Activated B cell treated with CpG ODN at 0.5 μM for 24 hours (primary cell): ENCODE measurements at regions of chr2 and their contacts with region 1.

Region 1: DNA sequence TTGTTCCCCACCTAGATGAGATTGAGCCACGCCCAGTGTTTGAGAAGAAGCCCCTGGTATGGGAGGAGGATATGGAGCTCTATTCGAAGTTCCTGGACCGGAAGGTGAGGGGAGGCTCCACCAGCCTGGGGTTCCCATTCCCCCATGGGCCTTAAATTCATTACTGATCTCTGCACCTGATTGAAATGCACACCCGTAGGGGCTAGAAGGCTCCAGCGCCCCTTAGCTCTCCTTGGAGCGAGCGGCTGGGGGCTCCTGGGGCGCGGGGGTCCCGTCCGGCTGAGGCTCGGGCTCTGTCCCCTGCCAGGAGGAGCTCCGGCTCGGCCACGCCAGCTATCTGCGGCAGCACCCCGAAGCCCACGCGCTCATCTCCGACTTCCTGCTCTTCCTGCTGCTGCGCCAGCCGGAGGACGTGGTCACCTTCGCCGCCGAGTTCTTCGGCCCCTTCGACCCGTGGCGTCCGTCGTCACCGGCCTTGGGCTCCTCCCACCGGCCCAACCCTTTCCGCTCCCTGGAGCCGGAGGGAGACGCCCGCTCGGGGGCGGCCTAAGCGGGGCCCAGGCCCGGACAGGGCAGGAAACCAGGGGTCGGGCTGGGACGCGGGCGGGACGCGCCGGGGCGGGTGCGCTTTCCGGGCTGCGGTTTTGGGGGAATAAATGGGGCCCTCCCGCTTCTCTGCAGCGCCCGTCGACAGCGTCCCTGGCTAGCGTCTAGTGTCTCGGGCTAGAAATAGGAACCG is 10.9 kb downstream of the CATIP start:
- DNase-seq: peak; percentile 74
- ATAC-seq: peak; percentile 86
- H3K4me3 Mint-ChIP-seq: peak overlapping the region; percentile 85
- H3K27ac Mint-ChIP-seq: peak overlapping the region; percentile 84
- H3K4me1 Mint-ChIP-seq: peaks cover 36% of the 10 kb centered on the region
- H3K27me3 Mint-ChIP-seq: no peaks in the 10 kb centered on the region
- CTCF ChIP-seq: no peak

Region 2: DNA sequence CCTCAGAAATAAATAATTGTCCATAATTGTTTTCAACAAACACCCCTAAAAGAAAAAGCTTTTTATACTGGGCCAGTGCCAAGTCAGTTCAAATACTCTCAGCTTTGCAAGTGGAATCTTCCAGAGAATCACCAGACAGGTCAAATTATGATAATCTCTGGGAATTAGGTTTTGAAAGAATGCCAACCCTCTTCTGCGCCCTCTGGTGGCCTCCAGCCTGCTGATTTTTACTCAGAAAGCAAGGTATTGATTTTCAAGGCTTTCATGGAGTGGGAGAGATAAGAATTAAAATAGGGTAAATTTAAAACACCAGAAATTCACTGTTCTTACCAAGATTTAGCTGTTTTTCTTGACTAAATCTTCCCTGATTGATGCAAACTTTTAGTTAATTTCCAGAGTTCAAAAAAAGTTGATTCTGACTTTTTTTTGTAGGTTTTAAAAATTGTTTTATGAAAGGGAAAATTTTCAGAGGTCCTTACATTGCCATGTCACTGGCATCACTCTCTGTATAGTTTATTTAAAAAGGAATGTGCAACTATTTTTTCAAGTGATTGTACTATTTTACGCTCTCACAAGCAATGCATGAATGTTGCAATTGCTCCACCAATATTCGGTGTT is 1224.8 kb before region 1 on chr2:
- CTCF ChIA-PET with region 1: no interaction called
- POLR2A ChIA-PET with region 1: no interaction called
- intact Hi-C with region 1: no loop called
- DNase-seq: no peak
- ATAC-seq: no peak
- H3K4me3 Mint-ChIP-seq: no peak overlapping the region
- H3K27ac Mint-ChIP-seq: no peak overlapping the region
- H3K4me1 Mint-ChIP-seq: no peaks in the 10 kb centered on the region
- H3K27me3 Mint-ChIP-seq: peaks cover 16% of the 10 kb centered on the region
- CTCF ChIP-seq: no peak

Region 3: GRCh38 chr2:218322895-218323808 is 44.4 kb before region 1 on chr2:
- CTCF ChIA-PET with region 1: no interaction called
- POLR2A ChIA-PET with region 1: interaction called, 3 read pairs
- intact Hi-C with region 1: loop called (anchors 5 kb)
- DNase-seq: peak; percentile 65
- ATAC-seq: peak; percentile 74
- H3K4me3 Mint-ChIP-seq: peak overlapping the region; percentile 81
- H3K27ac Mint-ChIP-seq: peak overlapping the region; percentile 61
- H3K4me1 Mint-ChIP-seq: peaks cover 42% of the 10 kb centered on the region
- H3K27me3 Mint-ChIP-seq: peaks cover 7% of the 10 kb centered on the region
- CTCF ChIP-seq: no peak

Region 4: GRCh38 chr2:218334531-218334930 is 33.1 kb before region 1 on chr2:
- CTCF ChIA-PET with region 1: no interaction called
- POLR2A ChIA-PET with region 1: no interaction called
- intact Hi-C with region 1: loop called (anchors 2 kb)
- DNase-seq: no peak
- ATAC-seq: no peak
- H3K4me3 Mint-ChIP-seq: no peak overlapping the region
- H3K27ac Mint-ChIP-seq: no peak overlapping the region
- H3K4me1 Mint-ChIP-seq: peaks cover 45% of the 10 kb centered on the region
- H3K27me3 Mint-ChIP-seq: no peaks in the 10 kb centered on the region
- CTCF ChIP-seq: no peak

Region 5: GRCh38 chr2:218387374-218388194 is 20.0 kb after region 1 on chr2:
- CTCF ChIA-PET with region 1: no interaction called
- POLR2A ChIA-PET with region 1: no interaction called
- intact Hi-C with region 1: loop called (anchors 2 kb)
- DNase-seq: no peak
- ATAC-seq: peak; percentile 88
- H3K4me3 Mint-ChIP-seq: peak overlapping the region; percentile 67
- H3K27ac Mint-ChIP-seq: no peak overlapping the region
- H3K4me1 Mint-ChIP-seq: peaks cover 7% of the 10 kb centered on the region
- H3K27me3 Mint-ChIP-seq: peaks cover 2% of the 10 kb centered on the region
- CTCF ChIP-seq: no peak

Region 6: GRCh38 chr2:218820746-218821369 is 453.3 kb after region 1 on chr2:
- CTCF ChIA-PET with region 1: no interaction called
- POLR2A ChIA-PET with region 1: no interaction called
- intact Hi-C with region 1: no loop called
- DNase-seq: no peak
- ATAC-seq: no peak
- H3K4me3 Mint-ChIP-seq: no peak overlapping the region
- H3K27ac Mint-ChIP-seq: no peak overlapping the region
- H3K4me1 Mint-ChIP-seq: no peaks in the 10 kb centered on the region
- H3K27me3 Mint-ChIP-seq: peaks cover 8% of the 10 kb centered on the region
- CTCF ChIP-seq: no peak